Activated naive CD4-positive, alpha-beta T cell treated with anti-CD3 and anti-CD28 coated beads for 36 hours (primary cell): ENCODE measurements at regions of chr3 and their contacts with region 1.

Region 1: DNA sequence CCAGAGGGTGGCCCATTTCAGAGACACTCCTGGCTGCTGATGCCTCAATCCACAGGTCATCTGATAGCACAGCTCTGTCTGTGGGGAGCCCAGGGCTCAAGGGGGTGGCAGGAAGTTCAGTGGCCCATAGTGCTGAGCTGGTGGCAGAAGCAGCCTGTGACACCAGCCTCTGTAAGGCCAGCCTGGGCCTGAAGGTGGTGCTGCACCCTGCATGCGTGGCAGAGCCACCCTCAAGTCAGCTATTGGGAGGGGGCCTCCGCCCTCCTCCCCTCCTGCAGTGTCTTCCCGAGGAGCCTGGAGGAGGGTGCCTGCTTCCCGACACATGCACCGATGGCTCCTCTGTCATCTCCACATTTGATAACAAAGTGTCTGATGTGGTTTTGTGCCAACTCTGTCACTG is 3.0 kb downstream of the PLA1A start:
- DNase-seq: peak; percentile 59
- H3K4me3 Mint-ChIP-seq: no peak overlapping the region
- H3K27ac Mint-ChIP-seq: no peak overlapping the region
- H3K4me1 Mint-ChIP-seq: peaks cover 3% of the 10 kb centered on the region
- H3K27me3 Mint-ChIP-seq: no peaks in the 10 kb centered on the region

Region 2: DNA sequence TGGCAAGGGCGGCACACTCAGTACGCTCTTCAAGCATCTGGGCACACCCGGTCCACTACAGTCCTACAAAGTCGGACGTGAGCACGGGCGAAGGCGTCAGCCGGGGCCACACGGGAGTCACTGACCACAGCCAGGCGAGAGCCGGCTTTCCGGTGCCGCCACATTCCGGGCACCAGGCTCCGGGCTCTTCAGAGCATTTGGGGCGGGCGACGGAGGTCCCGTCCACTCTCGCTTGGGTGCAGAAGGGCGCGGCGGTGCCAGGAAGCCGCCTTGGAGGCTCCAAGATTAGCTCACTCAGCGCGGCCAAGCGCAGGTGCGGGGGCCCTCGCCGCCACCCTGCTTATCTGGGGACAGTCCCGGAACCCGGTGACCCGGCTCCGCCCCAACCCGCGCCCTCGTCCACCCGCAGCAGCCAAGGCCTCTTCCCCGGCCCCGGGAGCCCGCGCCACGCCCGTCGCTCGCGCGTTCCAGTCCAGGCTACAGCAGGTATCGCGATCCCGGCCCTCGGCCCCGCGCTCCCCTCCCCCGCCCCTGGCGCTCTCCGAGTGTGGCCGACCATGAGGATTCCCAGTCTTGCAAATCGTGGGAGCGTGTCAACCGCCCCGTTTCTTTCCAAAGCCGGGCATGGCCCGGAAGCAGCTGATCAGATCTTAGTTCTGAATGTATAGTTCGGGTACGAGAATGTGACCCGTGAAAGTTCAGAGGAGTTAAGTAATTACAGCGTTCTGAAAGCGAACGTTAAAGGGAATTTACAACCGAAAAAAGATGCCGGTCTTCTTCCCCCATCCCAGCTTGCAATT is 21.2 kb before region 1 on chr3 and contains the start of gene ADPRH:
- CTCF ChIA-PET with region 1: interaction called, 3 read pairs
- intact Hi-C with region 1: loop called (anchors 2 kb)
- DNase-seq: peak; percentile 66
- H3K4me3 Mint-ChIP-seq: peak within 1 kb of the TSS; percentile 86
- H3K27ac Mint-ChIP-seq: peak within 1 kb of the TSS; percentile 54
- H3K4me1 Mint-ChIP-seq: peaks cover 15% of the 10 kb centered on the region
- H3K27me3 Mint-ChIP-seq: peaks cover 18% of the 10 kb centered on the region
- total RNA-seq, gene ADPRH: 2.6 to 3.1 TPM

Region 3: GRCh38 chr3:119628816-119629445 is 28.2 kb after region 1 on chr3:
- CTCF ChIA-PET with region 1: interaction called, 4 read pairs
- intact Hi-C with region 1: loop called (anchors 1 kb)
- DNase-seq: no peak
- H3K4me3 Mint-ChIP-seq: no peak overlapping the region
- H3K27ac Mint-ChIP-seq: no peak overlapping the region
- H3K4me1 Mint-ChIP-seq: peaks cover 24% of the 10 kb centered on the region
- H3K27me3 Mint-ChIP-seq: peaks cover 17% of the 10 kb centered on the region